Heart right ventricle (tissue), 16 donors: ENCODE measurements at regions of chr1 and their contacts with region 1.

Region 1: DNA sequence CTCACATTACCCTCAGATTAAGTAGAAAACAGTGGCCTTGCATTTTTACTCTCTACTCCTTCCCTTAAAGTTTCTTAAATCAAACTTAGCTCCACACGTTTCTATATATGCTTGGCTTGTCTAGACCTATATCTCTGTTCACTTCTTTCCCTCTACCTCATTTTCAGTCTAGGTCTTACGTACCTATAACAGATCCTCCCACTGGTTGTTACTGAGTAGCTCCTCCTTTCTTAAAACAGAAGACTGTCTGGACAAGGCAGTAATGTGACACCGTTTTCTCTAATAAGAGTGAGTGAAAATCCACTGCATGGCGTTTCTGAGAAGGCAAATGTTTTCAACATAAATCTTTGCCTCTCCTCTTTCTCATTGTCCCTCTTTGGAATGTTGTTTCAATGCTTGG is 211.7 kb upstream of the POGK start:
- DNase-seq: no peak
- ATAC-seq: no peak
- H3K4me3 ChIP-seq: no peak overlapping the region
- H3K27ac ChIP-seq: no peak overlapping the region
- H3K4me1 ChIP-seq: no peaks in the 10 kb centered on the region
- H3K27me3 ChIP-seq: no peaks in the 10 kb centered on the region
- CTCF ChIP-seq: no peak

Region 2: GRCh38 chr1:166682588-166682987 is 55.0 kb after region 1 on chr1:
- intact Hi-C with region 1: loop called in 1 of 10 experiments (anchors 10 kb)
- DNase-seq: no peak
- ATAC-seq: no peak
- H3K4me3 ChIP-seq: no peak overlapping the region
- H3K27ac ChIP-seq: no peak overlapping the region
- H3K4me1 ChIP-seq: no peaks in the 10 kb centered on the region
- H3K27me3 ChIP-seq: no peaks in the 10 kb centered on the region
- CTCF ChIP-seq: no peak